GM12878 (cell line): ENCODE measurements at regions of chr10 and their contacts with region 1.

Region 1: GRCh38 chr10:14822879-14823755 is 14.7 kb downstream of the CDNF start:
- DNase-seq: no peak
- ATAC-seq: peak; percentile 91
- H3K4me3 ChIP-seq: no peak overlapping the region
- H3K27ac ChIP-seq: no peak overlapping the region
- H3K4me1 ChIP-seq: no peaks in the 10 kb centered on the region
- H3K27me3 ChIP-seq: no peaks in the 10 kb centered on the region
- CTCF ChIP-seq: peak; percentile 56 to 81 (median 73)
- EP300 ChIP-seq: no peak
- POLR2A ChIP-seq: no peak
- RAD21 ChIP-seq: peak; percentile 98

Region 2: GRCh38 chr10:14200698-14201544 is 622.2 kb before region 1 on chr10:
- CTCF ChIA-PET with region 1: interaction called, 14 read pairs
- POLR2A ChIA-PET with region 1: no interaction called
- RAD21 ChIA-PET with region 1: no interaction called
- SMC1A ChIA-PET with region 1: interaction called, 5 read pairs
- in situ Hi-C with region 1: loop called (anchors 10 kb)
- intact Hi-C with region 1: no loop called
- DNase-seq: no peak
- ATAC-seq: no peak
- H3K4me3 ChIP-seq: no peak overlapping the region
- H3K27ac ChIP-seq: no peak overlapping the region
- H3K4me1 ChIP-seq: no peaks in the 10 kb centered on the region
- H3K27me3 ChIP-seq: no peaks in the 10 kb centered on the region; a peak in 1 of 4 replicates
- CTCF ChIP-seq: peak; percentile 12 to 35 (median 24); a peak in 3 of 6 replicates
- EP300 ChIP-seq: no peak
- POLR2A ChIP-seq: no peak
- RAD21 ChIP-seq: no peak

Region 3: DNA sequence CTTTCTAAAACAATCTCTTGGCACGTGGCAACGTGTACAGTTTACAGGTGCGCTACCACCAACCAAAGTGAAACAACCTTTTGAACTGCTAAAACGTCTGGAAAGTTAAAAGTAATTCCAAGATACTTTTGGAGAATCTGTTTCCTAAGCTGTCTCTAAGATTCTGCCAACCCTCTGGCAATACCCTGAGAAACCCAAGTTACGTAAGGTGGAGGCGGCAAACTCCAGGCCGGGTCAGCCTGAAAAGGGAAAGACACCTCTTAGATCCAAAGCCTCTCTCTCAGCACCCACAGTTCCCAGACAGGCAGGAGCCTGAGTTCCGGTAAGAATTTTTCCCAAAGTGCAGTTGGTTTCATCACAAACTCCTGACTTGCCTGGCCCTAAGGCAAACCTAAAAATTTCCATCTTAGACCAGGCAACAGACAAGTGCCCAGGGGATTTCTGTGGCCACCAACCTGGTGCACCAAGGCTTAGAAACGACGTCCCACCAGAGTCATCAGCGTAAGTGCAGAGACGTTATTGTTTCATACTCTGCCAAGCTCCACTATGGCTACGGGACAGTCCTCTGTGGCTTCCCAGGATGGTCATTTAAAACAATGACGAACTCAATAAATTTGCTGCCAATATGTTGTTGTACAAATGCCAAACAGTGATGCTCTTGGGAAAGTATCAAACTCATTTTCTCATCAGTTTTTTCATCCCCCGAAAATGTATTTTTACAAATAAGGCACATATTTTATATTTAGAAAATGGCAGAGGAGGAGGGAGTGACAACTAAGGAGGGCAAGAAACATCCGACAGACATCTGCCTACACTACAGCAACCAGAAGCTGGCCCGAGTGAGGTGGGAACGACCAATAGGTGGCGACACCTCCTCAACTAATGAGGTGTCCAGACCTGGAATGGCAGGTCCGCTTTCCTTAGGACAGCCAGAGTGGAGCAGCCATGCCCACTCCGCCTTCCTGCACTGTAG is 286.6 kb before region 1 on chr10:
- CTCF ChIA-PET with region 1: interaction called, 134 read pairs
- POLR2A ChIA-PET with region 1: no interaction called
- RAD21 ChIA-PET with region 1: interaction called, 74 read pairs
- SMC1A ChIA-PET with region 1: interaction called, 66 read pairs
- in situ Hi-C with region 1: no loop called
- intact Hi-C with region 1: loop called (anchors 1 kb)
- DNase-seq: no peak
- ATAC-seq: peak; percentile 88
- H3K4me3 ChIP-seq: no peak overlapping the region
- H3K27ac ChIP-seq: no peak overlapping the region
- H3K4me1 ChIP-seq: peaks cover 3% of the 10 kb centered on the region; the same call in 1 of the 2 replicates
- H3K27me3 ChIP-seq: no peaks in the 10 kb centered on the region
- CTCF ChIP-seq: peak; percentile 65 to 69 (median 66); a peak in 5 of 6 replicates
- EP300 ChIP-seq: no peak
- POLR2A ChIP-seq: no peak
- RAD21 ChIP-seq: peak; percentile 71

Region 4: GRCh38 chr10:14556285-14556956 is 266.7 kb before region 1 on chr10:
- CTCF ChIA-PET with region 1: interaction called, 17 read pairs
- POLR2A ChIA-PET with region 1: no interaction called
- RAD21 ChIA-PET with region 1: interaction called, 5 read pairs
- SMC1A ChIA-PET with region 1: interaction called, 12 read pairs
- in situ Hi-C with region 1: no loop called
- intact Hi-C with region 1: loop called (anchors 5 kb)
- DNase-seq: peak; percentile 39
- ATAC-seq: peak; percentile 71
- H3K4me3 ChIP-seq: no peak overlapping the region
- H3K27ac ChIP-seq: peak overlapping the region; percentile 46
- H3K4me1 ChIP-seq: peaks cover 42% of the 10 kb centered on the region
- H3K27me3 ChIP-seq: no peaks in the 10 kb centered on the region
- CTCF ChIP-seq: peak; percentile 46 to 68 (median 51); a peak in 5 of 6 replicates
- EP300 ChIP-seq: no peak
- POLR2A ChIP-seq: 0 out of 2 replicates have a peak, but pooled peaks have one; percentile 32
- RAD21 ChIP-seq: peak; percentile 57

Region 5: GRCh38 chr10:14604181-14605142 is 218.7 kb before region 1 on chr10:
- CTCF ChIA-PET with region 1: interaction called, 7 read pairs
- POLR2A ChIA-PET with region 1: interaction called, 6 read pairs
- RAD21 ChIA-PET with region 1: interaction called, 3 read pairs
- SMC1A ChIA-PET with region 1: interaction called, 6 read pairs
- in situ Hi-C with region 1: no loop called
- intact Hi-C with region 1: loop called (anchors 2 kb)
- DNase-seq: no peak
- ATAC-seq: peak; percentile 52
- H3K4me3 ChIP-seq: peak overlapping the region; percentile 77
- H3K27ac ChIP-seq: peak overlapping the region; percentile 84
- H3K4me1 ChIP-seq: peaks cover 44% of the 10 kb centered on the region
- H3K27me3 ChIP-seq: no peaks in the 10 kb centered on the region
- CTCF ChIP-seq: no peak
- EP300 ChIP-seq: no peak
- POLR2A ChIP-seq: peak; percentile 85
- RAD21 ChIP-seq: 0 out of 2 replicates have a peak, but pooled peaks have one; percentile 1

Region 6: DNA sequence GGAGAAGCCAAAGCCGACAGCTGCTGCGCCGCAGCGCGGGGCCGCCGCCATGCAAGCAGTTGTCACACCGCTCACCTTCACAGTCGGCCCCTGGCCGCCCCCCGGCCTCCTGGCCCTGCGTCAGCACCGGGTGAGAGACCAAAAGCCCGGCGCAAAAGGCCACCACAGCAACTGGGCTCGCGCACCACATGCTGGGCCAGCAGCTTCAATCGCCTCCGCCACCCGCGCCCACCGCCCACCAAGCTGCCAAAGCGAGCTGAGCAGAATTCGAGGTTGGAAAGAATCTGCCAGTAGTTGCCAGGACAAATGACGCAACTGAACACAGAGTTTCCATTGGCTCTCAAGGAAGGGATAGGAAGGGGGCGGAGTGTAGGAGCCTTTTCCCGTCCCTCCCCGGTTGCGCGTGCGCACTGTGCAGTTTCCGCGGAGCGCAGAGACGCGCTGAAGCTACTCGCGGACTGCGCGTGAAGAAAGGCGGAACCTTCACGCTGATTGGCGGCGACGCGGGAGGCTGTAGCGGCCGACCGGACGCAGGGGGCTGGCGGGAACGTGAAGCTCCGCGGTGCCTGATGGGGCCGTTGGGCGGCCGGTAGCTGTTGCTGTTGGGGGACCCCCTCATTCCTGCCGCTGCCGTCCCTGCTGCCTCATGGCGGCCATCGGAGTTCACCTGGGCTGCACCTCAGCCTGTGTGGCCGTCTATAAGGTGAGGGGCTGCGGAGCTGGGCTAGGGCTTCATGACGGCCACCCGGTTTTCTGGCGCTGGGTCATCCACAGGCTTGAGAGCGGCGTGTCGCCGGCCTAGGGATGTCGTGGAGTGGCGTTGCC is 14.9 kb after region 1 on chr10 and contains the starts of genes CDNF, HSPA14 and MSANTD7:
- CTCF ChIA-PET with region 1: interaction called, 44 read pairs
- POLR2A ChIA-PET with region 1: no interaction called
- RAD21 ChIA-PET with region 1: interaction called, 12 read pairs
- SMC1A ChIA-PET with region 1: interaction called, 33 read pairs
- in situ Hi-C with region 1: no loop called
- intact Hi-C with region 1: no loop called
- DNase-seq: peak; percentile 98
- ATAC-seq: peak; percentile 98
- H3K4me3 ChIP-seq: peak within 1 kb of the TSS; percentile 92
- H3K27ac ChIP-seq: peak within 1 kb of the TSS; percentile 96
- H3K4me1 ChIP-seq: peaks cover 7% of the 10 kb centered on the region; the same call in 1 of the 2 replicates
- H3K27me3 ChIP-seq: no peaks in the 10 kb centered on the region
- CTCF ChIP-seq: no peak
- EP300 ChIP-seq: no peak
- POLR2A ChIP-seq: peak; percentile 95
- RAD21 ChIP-seq: no peak
- polyA plus RNA-seq, gene CDNF: 0.08 to 0.29 TPM
- polyA plus RNA-seq, gene HSPA14: 44.1 to 46.4 TPM
- polyA plus RNA-seq, gene MSANTD7: 3.5 to 4.5 TPM

Region 7: GRCh38 chr10:14911801-14912200 is 88.7 kb after region 1 on chr10:
- CTCF ChIA-PET with region 1: no interaction called
- POLR2A ChIA-PET with region 1: no interaction called
- RAD21 ChIA-PET with region 1: no interaction called
- SMC1A ChIA-PET with region 1: no interaction called
- in situ Hi-C with region 1: no loop called
- intact Hi-C with region 1: no loop called
- DNase-seq: no peak
- ATAC-seq: no peak
- H3K4me3 ChIP-seq: no peak overlapping the region
- H3K27ac ChIP-seq: no peak overlapping the region
- H3K4me1 ChIP-seq: no peaks in the 10 kb centered on the region
- H3K27me3 ChIP-seq: no peaks in the 10 kb centered on the region
- CTCF ChIP-seq: no peak
- EP300 ChIP-seq: no peak
- POLR2A ChIP-seq: no peak
- RAD21 ChIP-seq: no peak

Region 8: GRCh38 chr10:14936584-14936983 is 113.5 kb after region 1 on chr10:
- CTCF ChIA-PET with region 1: no interaction called
- POLR2A ChIA-PET with region 1: no interaction called
- RAD21 ChIA-PET with region 1: no interaction called
- SMC1A ChIA-PET with region 1: no interaction called
- in situ Hi-C with region 1: no loop called
- intact Hi-C with region 1: no loop called
- DNase-seq: no peak
- ATAC-seq: no peak
- H3K4me3 ChIP-seq: no peak overlapping the region
- H3K27ac ChIP-seq: no peak overlapping the region
- H3K4me1 ChIP-seq: no peaks in the 10 kb centered on the region
- H3K27me3 ChIP-seq: no peaks in the 10 kb centered on the region
- CTCF ChIP-seq: no peak
- EP300 ChIP-seq: no peak
- POLR2A ChIP-seq: no peak
- RAD21 ChIP-seq: no peak